IMR-90 (cell line): ENCODE measurements at regions of chr3 and their contacts with region 1.

Region 1: GRCh38 chr3:184568924-184569829 is 7.6 kb downstream of the EPHB3 start:
- DNase-seq: peak; percentile 97
- ATAC-seq: peak; percentile 83
- H3K4me3 ChIP-seq: peak overlapping the region; percentile 48
- H3K27ac ChIP-seq: peak overlapping the region; percentile 93
- H3K4me1 ChIP-seq: peaks cover 45% of the 10 kb centered on the region
- H3K27me3 ChIP-seq: no peaks in the 10 kb centered on the region
- CTCF ChIP-seq: no peak
- POLR2A ChIP-seq: no peak
- RAD21 ChIP-seq: peak; percentile 7; the same call in 1 of the 2 replicates

Region 2: GRCh38 chr3:184636741-184637316 is 67.7 kb after region 1 on chr3:
- CTCF ChIA-PET with region 1: no interaction called
- POLR2A ChIA-PET with region 1: no interaction called
- dilution Hi-C with region 1: no loop called
- in situ Hi-C with region 1: no loop called
- intact Hi-C with region 1: loop called (anchors 2 kb)
- DNase-seq: peak; percentile 77
- ATAC-seq: peak; percentile 90
- H3K4me3 ChIP-seq: no peak overlapping the region
- H3K27ac ChIP-seq: 0 out of 2 replicates have a peak overlapping the region, but pooled peaks have one; percentile 1
- H3K4me1 ChIP-seq: peaks cover 15% of the 10 kb centered on the region
- H3K27me3 ChIP-seq: peaks cover 22% of the 10 kb centered on the region
- CTCF ChIP-seq: no peak
- POLR2A ChIP-seq: no peak
- RAD21 ChIP-seq: no peak

Region 3: DNA sequence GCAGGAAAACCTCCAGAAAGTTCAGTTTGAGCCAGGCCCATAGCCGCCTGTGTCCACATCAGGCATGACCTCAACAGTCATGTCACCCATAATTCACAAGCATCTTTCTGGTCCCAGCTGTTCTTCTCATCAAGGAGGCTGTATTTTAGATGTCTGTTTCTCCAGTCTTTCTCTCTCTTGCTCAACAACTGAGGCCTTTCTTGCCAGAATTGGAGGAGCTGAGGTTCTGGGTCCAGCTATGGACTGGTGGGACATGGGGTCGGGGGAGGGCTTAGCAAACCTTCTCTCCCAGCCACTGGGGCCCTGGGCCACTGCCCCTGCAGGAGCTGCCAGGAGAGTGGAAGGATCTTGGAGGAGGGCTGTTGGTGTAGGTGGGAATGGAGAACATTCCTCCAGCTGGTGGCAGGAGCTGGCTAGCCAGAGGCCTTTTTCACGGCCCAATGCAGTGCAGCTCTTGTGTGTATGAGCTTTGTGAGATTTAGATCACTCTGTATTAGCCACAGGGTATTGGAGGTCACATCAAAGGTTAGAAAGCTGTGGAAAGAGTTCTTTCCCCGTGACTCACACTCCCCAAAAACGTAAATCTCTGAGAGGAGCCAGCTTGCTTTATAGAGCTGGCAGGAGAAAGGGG is 119.2 kb after region 1 on chr3:
- CTCF ChIA-PET with region 1: no interaction called
- POLR2A ChIA-PET with region 1: no interaction called
- dilution Hi-C with region 1: no loop called
- in situ Hi-C with region 1: no loop called
- intact Hi-C with region 1: loop called (anchors 2 kb)
- DNase-seq: peak; percentile 91
- ATAC-seq: peak; percentile 85
- H3K4me3 ChIP-seq: no peak overlapping the region
- H3K27ac ChIP-seq: peak overlapping the region; percentile 98
- H3K4me1 ChIP-seq: peaks cover 44% of the 10 kb centered on the region
- H3K27me3 ChIP-seq: peaks cover 11% of the 10 kb centered on the region
- CTCF ChIP-seq: peak; percentile 20; the same call in 1 of the 2 replicates
- POLR2A ChIP-seq: no peak
- RAD21 ChIP-seq: peak; percentile 22; the same call in 1 of the 2 replicates

Region 4: GRCh38 chr3:184716622-184717398 is 147.6 kb after region 1 on chr3:
- CTCF ChIA-PET with region 1: no interaction called
- POLR2A ChIA-PET with region 1: no interaction called
- dilution Hi-C with region 1: no loop called
- in situ Hi-C with region 1: no loop called
- intact Hi-C with region 1: loop called (anchors 2 kb)
- DNase-seq: peak; percentile 72
- ATAC-seq: peak; percentile 54
- H3K4me3 ChIP-seq: peak overlapping the region; percentile 1; the same call in 1 of the 2 replicates
- H3K27ac ChIP-seq: peak overlapping the region; percentile 96
- H3K4me1 ChIP-seq: peaks cover 18% of the 10 kb centered on the region
- H3K27me3 ChIP-seq: no peaks in the 10 kb centered on the region
- CTCF ChIP-seq: no peak
- POLR2A ChIP-seq: no peak
- RAD21 ChIP-seq: no peak

Region 5: GRCh38 chr3:185070491-185071286 is 501.5 kb after region 1 on chr3:
- CTCF ChIA-PET with region 1: no interaction called
- POLR2A ChIA-PET with region 1: no interaction called
- dilution Hi-C with region 1: no loop called
- in situ Hi-C with region 1: no loop called
- intact Hi-C with region 1: no loop called
- DNase-seq: peak; percentile 25
- ATAC-seq: peak; percentile 83
- H3K4me3 ChIP-seq: no peak overlapping the region
- H3K27ac ChIP-seq: no peak overlapping the region
- H3K4me1 ChIP-seq: no peaks in the 10 kb centered on the region
- H3K27me3 ChIP-seq: no peaks in the 10 kb centered on the region; the same call in 1 of the 2 replicates
- CTCF ChIP-seq: peak; percentile 34
- POLR2A ChIP-seq: no peak
- RAD21 ChIP-seq: peak; percentile 29; the same call in 1 of the 2 replicates